GM12878 (cell line): ENCODE measurements at regions of chr5 and their contacts with region 1.

Region 1: DNA sequence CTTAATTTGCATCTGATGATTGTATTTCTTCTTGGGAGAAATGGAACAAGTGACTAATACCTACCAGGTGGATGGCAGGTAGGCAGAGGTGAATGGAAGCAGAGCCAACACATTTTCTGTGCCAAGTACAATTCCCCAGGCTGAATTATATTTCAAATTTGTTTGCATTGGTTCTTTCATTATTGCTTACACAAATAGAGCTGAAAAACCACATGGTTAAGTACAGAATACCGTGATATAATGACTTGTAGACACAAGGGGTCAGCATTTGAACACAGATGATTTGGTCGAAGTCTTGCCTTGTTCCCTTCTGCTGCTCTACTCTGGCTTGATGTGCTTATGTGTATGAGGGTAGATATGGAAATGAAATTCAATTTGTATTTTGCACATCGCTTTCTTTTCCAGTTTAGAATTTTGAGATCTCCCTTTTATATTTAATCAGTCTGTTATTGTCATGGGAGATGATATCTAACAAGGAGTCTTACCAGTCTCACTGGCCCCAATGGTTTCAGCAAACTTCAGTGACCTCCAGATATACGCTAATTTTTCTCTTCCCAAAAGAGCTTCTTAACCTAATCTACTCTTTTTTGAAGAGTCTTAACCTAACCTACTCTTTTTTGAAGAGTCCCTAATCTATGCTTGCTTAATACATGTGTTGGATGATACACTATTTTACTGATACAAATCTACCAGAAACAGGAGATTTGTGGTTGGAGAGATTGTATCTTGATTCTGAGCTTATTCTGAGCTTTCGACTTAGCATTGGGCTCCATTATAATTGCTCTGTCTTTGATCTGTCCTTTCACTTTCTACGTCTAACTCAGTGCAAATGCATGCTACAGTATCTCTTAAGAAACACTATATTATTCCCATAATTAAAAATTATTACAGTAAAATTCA is 88.1 kb downstream of the PCSK1 start:
- DNase-seq: peak; percentile 59
- ATAC-seq: peak; percentile 99
- H3K4me3 ChIP-seq: no peak overlapping the region
- H3K27ac ChIP-seq: no peak overlapping the region
- H3K4me1 ChIP-seq: no peaks in the 10 kb centered on the region
- H3K27me3 ChIP-seq: no peaks in the 10 kb centered on the region
- CTCF ChIP-seq: peak; percentile 37 to 79 (median 66); a peak in 5 of 6 replicates
- EP300 ChIP-seq: no peak
- POLR2A ChIP-seq: no peak
- RAD21 ChIP-seq: peak; percentile 89

Region 2: GRCh38 chr5:96125231-96125891 is 219.6 kb before region 1 on chr5:
- CTCF ChIA-PET with region 1: no interaction called
- POLR2A ChIA-PET with region 1: no interaction called
- RAD21 ChIA-PET with region 1: no interaction called
- SMC1A ChIA-PET with region 1: no interaction called
- in situ Hi-C with region 1: no loop called
- intact Hi-C with region 1: no loop called
- DNase-seq: no peak
- ATAC-seq: no peak
- H3K4me3 ChIP-seq: no peak overlapping the region
- H3K27ac ChIP-seq: no peak overlapping the region
- H3K4me1 ChIP-seq: no peaks in the 10 kb centered on the region
- H3K27me3 ChIP-seq: no peaks in the 10 kb centered on the region
- CTCF ChIP-seq: no peak
- EP300 ChIP-seq: no peak
- POLR2A ChIP-seq: no peak
- RAD21 ChIP-seq: no peak

Region 3: GRCh38 chr5:96439477-96440184 is 94.7 kb after region 1 on chr5:
- CTCF ChIA-PET with region 1: interaction called, 102 read pairs
- POLR2A ChIA-PET with region 1: no interaction called
- RAD21 ChIA-PET with region 1: interaction called, 21 read pairs
- SMC1A ChIA-PET with region 1: interaction called, 47 read pairs
- in situ Hi-C with region 1: no loop called
- intact Hi-C with region 1: loop called (anchors 1 kb)
- DNase-seq: peak; percentile 56
- ATAC-seq: peak; percentile 96
- H3K4me3 ChIP-seq: peak overlapping the region; percentile 28; the same call in 1 of the 2 replicates
- H3K27ac ChIP-seq: peak overlapping the region; percentile 48
- H3K4me1 ChIP-seq: peaks cover 11% of the 10 kb centered on the region
- H3K27me3 ChIP-seq: no peaks in the 10 kb centered on the region
- CTCF ChIP-seq: peak; percentile 17 to 54 (median 33); a peak in 5 of 6 replicates
- EP300 ChIP-seq: peak in 1 of 2 experiments; percentile 52; a peak in 1 of 4 replicates
- POLR2A ChIP-seq: no peak
- RAD21 ChIP-seq: peak; percentile 49

Region 4: DNA sequence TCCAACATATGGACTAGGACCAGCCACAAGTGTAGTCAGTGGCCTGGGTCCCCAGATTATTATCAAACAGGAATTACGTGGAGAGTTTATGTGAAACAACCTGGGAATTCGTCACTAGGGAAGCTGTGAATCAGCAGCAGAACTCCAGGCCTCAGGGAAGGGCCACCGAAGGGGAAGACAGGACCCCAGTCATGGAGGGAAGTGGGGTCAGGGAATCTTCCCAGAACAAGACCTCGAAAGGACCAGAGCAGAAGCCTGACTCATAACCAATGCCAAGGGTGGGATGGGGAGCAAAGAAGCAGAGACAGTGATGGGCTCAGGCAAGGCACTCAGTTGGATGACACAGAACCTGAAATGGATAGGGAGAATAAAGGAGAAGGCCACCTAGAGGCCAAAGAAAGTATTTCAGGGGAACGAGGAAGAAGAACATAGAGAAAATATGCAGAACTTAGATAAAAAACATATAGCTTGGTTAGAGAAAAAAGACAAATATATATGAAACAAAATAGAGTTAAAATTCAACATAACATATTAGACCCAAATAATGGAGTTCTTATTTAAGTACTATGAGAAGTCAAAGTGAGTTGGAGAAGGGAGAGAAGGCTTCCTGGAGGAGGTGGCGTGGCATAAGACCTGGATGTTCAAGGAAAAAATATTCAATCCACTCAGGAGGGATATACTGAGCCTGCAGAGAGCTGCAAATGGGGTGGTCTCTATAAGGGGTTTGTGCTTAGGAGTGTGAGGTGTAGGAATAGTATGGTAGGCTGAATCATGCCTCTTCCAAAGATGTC is 250.6 kb after region 1 on chr5:
- CTCF ChIA-PET with region 1: interaction called, 360 read pairs
- POLR2A ChIA-PET with region 1: no interaction called
- RAD21 ChIA-PET with region 1: interaction called, 59 read pairs
- SMC1A ChIA-PET with region 1: interaction called, 114 read pairs
- in situ Hi-C with region 1: loop called (anchors 5 kb)
- intact Hi-C with region 1: no loop called
- DNase-seq: no peak
- ATAC-seq: peak; percentile 75
- H3K4me3 ChIP-seq: no peak overlapping the region
- H3K27ac ChIP-seq: no peak overlapping the region
- H3K4me1 ChIP-seq: no peaks in the 10 kb centered on the region
- H3K27me3 ChIP-seq: no peaks in the 10 kb centered on the region; a peak in 1 of 4 replicates
- CTCF ChIP-seq: peak; percentile 40 to 75 (median 57)
- EP300 ChIP-seq: no peak
- POLR2A ChIP-seq: no peak
- RAD21 ChIP-seq: peak; percentile 50

Region 5: DNA sequence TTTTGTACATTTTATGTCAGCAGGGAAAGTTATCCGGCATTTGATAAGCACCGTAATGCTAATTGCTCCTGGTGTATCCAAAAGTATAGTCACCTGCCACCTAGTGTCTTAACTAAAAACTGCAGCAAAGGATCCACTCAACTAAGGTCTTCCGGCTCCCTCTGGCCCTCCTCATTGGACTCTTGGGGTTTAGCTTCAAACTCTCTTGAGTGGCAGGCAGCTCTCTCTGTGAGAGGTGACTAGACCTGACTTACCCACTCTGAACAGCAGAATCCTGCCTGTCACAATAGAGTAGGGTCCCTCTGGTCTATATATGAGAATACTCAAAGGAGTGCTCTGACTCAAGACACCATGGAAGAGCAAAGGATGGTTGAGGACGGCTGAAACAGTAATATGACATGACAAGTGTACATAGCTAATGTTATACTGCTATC is 256.9 kb after region 1 on chr5:
- CTCF ChIA-PET with region 1: interaction called, 360 read pairs
- POLR2A ChIA-PET with region 1: interaction called, 4 read pairs
- RAD21 ChIA-PET with region 1: interaction called, 59 read pairs
- SMC1A ChIA-PET with region 1: interaction called, 114 read pairs
- in situ Hi-C with region 1: loop called (anchors 5 kb)
- intact Hi-C with region 1: loop called (anchors 1 kb)
- DNase-seq: peak; percentile 16
- ATAC-seq: peak; percentile 96
- H3K4me3 ChIP-seq: no peak overlapping the region
- H3K27ac ChIP-seq: no peak overlapping the region
- H3K4me1 ChIP-seq: no peaks in the 10 kb centered on the region
- H3K27me3 ChIP-seq: no peaks in the 10 kb centered on the region
- CTCF ChIP-seq: peak; percentile 71 to 83 (median 77)
- EP300 ChIP-seq: no peak
- POLR2A ChIP-seq: no peak
- RAD21 ChIP-seq: peak; percentile 62

Region 6: DNA sequence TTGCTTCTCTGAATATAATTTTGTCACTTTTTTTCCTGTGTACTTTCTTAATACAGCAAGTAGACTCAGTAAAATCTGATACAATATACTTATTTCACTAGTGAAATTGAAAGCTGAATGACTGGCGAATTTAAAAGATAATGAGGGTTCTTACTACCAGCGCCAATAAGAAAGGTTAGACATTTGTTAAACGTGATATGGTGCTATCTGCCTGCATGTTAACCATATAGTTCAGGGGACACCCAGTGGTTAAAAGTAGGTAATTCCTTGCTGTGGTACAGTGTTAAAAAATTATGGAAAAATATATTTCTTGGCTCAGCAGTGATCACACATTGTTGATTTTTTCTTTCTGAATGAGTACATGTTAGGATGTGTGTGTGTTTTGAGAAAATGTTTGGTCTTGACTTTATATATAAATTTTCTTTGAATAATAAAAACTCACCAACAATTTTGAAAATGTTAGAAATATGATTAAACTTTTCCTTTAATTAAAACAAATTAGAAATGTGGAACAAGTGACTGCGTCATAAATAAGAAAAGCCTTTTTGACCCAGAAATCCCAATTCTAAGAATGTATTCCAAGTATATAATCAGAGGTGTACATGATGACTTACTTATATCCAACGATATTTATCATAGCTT is 343.0 kb after region 1 on chr5:
- CTCF ChIA-PET with region 1: interaction called, 11 read pairs
- POLR2A ChIA-PET with region 1: no interaction called
- RAD21 ChIA-PET with region 1: interaction called, 5 read pairs
- SMC1A ChIA-PET with region 1: interaction called, 9 read pairs
- in situ Hi-C with region 1: loop called (anchors 10 kb)
- intact Hi-C with region 1: loop called (anchors 10 kb)
- DNase-seq: no peak
- ATAC-seq: peak; percentile 99
- H3K4me3 ChIP-seq: no peak overlapping the region
- H3K27ac ChIP-seq: no peak overlapping the region
- H3K4me1 ChIP-seq: no peaks in the 10 kb centered on the region
- H3K27me3 ChIP-seq: no peaks in the 10 kb centered on the region
- CTCF ChIP-seq: peak; percentile 55 to 65 (median 56)
- EP300 ChIP-seq: no peak
- POLR2A ChIP-seq: no peak
- RAD21 ChIP-seq: peak; percentile 79

Region 7: DNA sequence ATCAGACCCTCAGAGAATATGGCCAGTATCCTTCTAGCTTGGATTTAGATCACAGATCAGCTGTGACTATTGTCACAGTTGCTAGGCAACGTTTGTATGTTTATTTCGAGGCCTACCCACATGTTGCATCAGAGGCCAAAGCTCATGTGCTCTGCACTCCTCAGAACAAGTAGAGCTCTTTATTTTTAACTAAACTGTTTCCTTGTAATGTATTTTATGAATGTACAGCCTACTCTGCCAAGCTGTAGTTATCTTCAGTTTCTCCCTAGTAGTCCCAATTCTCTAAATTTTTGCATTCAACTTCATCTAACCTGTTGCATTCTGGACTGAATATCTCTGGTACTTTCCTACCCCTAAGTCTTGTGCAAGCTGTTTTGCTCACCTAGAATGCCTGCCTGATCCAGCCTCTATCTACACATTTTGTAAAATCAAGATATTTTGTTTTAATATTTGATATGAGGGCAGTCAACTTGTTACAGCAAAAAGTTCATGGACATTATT is 370.1 kb after region 1 on chr5:
- CTCF ChIA-PET with region 1: no interaction called
- POLR2A ChIA-PET with region 1: no interaction called
- RAD21 ChIA-PET with region 1: no interaction called
- SMC1A ChIA-PET with region 1: no interaction called
- in situ Hi-C with region 1: no loop called
- intact Hi-C with region 1: loop called (anchors 10 kb)
- DNase-seq: no peak
- ATAC-seq: peak; percentile 85
- H3K4me3 ChIP-seq: no peak overlapping the region
- H3K27ac ChIP-seq: no peak overlapping the region
- H3K4me1 ChIP-seq: no peaks in the 10 kb centered on the region
- H3K27me3 ChIP-seq: no peaks in the 10 kb centered on the region
- CTCF ChIP-seq: no peak
- EP300 ChIP-seq: 0 out of 4 replicates have a peak, but pooled peaks of 1 of the 2 experiments have one; percentile 32
- POLR2A ChIP-seq: no peak
- RAD21 ChIP-seq: no peak